ENCODE measurements at regions of chr1 and their contacts with region 1.

Region 1: DNA sequence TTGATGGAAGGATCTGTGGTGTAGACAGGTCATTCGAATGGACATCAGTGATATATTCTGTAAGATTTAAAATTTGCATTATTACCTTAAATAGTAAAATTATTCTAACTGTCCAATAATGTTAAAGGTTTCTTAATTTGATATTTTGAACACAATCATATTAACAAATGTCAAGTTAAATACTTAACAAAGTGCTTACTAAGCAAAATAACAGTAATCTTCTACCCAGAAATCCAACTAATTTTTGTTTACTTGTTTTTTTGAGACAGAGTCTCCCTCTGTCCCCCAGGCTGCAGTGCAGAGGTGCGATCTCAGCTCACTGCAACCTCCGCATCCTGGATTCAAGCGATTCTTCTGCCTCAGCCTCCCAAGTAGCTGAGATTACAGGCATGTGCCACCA is 33.9 kb downstream of the USP33 start:
- DNase-seq: no peak
- ATAC-seq: no peak
- H3K4me3 ChIP-seq: no peak overlapping the region
- H3K4me3 Mint-ChIP-seq: no peak overlapping the region
- H3K27ac ChIP-seq: no peak overlapping the region
- H3K27ac Mint-ChIP-seq: no peak overlapping the region
- H3K4me1 ChIP-seq: no peaks in the 10 kb centered on the region
- H3K4me1 Mint-ChIP-seq: no peaks in the 10 kb centered on the region
- H3K27me3 ChIP-seq: no peaks in the 10 kb centered on the region
- H3K27me3 Mint-ChIP-seq: no peaks in the 10 kb centered on the region
- CTCF ChIP-seq: no peak

Region 2: DNA sequence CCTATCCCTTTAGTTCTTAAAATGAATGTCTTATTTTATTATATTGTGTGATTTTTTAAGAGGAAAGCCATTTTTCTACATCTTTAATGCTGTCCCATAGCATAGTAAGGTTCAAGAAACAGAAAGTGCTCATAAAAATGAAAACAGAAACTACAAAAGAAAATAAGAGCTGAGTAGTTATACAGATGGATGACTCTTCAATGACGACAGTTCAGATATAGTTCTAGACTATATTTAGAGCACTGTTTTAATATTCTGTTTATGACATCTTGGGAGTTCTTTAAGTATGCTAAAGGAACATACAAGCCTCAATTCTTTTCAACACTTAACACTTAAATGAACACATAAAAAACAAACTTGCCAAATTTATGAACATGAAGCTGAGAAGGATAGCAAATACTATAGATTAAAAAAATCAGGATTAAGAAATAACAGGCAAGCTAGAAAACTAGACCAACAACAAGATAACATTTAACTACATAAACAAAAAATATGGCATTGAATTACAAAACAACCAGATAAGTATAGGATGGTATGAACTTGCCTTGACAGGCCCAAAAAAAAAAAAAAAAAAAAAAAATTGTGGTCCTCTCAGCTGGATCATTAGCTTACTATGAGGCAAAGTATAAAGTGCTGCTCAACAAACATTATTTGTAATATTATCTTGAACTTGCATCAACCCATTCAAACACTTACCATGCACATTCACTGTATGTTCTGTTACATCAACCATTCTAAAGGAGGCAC is 131.2 kb before region 1 on chr1:
- CTCF ChIA-PET with region 1: no interaction called
- POLR2A ChIA-PET with region 1: no interaction called
- intact Hi-C with region 1: no loop called
- DNase-seq: no peak
- ATAC-seq: no peak
- H3K4me3 ChIP-seq: no peak overlapping the region
- H3K4me3 Mint-ChIP-seq: no peak overlapping the region
- H3K27ac ChIP-seq: no peak overlapping the region
- H3K27ac Mint-ChIP-seq: peak overlapping the region; percentile 3
- H3K4me1 ChIP-seq: no peaks in the 10 kb centered on the region
- H3K4me1 Mint-ChIP-seq: peaks cover 39% of the 10 kb centered on the region
- H3K27me3 ChIP-seq: no peaks in the 10 kb centered on the region
- H3K27me3 Mint-ChIP-seq: no peaks in the 10 kb centered on the region
- CTCF ChIP-seq: no peak

Region 3: DNA sequence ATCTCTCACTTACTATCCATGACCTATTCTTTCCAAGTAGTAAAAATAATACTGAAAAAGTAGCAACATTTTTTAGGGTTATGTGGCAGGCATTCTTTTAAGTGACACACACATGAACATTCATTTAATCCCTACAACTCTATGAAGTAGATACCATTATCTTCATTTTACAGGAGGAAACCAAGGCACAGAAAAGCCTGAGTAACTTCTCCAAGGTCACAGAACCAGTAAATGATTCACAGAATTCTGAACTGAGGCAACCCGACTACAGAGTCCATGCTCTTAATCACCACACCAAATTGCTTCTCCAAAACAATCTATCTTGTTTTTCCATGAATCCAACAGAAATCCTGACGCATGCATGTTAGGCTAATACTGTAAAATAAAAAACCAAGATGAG is 235.7 kb after region 1 on chr1:
- CTCF ChIA-PET with region 1: no interaction called
- POLR2A ChIA-PET with region 1: no interaction called
- intact Hi-C with region 1: loop called in 1 of 2 experiments (anchors 5 kb)
- DNase-seq: no peak
- ATAC-seq: no peak
- H3K4me3 ChIP-seq: no peak overlapping the region
- H3K4me3 Mint-ChIP-seq: no peak overlapping the region
- H3K27ac ChIP-seq: no peak overlapping the region
- H3K27ac Mint-ChIP-seq: no peak overlapping the region
- H3K4me1 ChIP-seq: no peaks in the 10 kb centered on the region
- H3K4me1 Mint-ChIP-seq: peaks cover 34% of the 10 kb centered on the region
- H3K27me3 ChIP-seq: no peaks in the 10 kb centered on the region
- H3K27me3 Mint-ChIP-seq: no peaks in the 10 kb centered on the region
- CTCF ChIP-seq: no peak

Measured in CD4-positive, alpha-beta T cell (primary cell).